CD4-positive, alpha-beta memory T cell (primary cell): ENCODE measurements at regions of chr20 and their contacts with region 1.

Region 1: DNA sequence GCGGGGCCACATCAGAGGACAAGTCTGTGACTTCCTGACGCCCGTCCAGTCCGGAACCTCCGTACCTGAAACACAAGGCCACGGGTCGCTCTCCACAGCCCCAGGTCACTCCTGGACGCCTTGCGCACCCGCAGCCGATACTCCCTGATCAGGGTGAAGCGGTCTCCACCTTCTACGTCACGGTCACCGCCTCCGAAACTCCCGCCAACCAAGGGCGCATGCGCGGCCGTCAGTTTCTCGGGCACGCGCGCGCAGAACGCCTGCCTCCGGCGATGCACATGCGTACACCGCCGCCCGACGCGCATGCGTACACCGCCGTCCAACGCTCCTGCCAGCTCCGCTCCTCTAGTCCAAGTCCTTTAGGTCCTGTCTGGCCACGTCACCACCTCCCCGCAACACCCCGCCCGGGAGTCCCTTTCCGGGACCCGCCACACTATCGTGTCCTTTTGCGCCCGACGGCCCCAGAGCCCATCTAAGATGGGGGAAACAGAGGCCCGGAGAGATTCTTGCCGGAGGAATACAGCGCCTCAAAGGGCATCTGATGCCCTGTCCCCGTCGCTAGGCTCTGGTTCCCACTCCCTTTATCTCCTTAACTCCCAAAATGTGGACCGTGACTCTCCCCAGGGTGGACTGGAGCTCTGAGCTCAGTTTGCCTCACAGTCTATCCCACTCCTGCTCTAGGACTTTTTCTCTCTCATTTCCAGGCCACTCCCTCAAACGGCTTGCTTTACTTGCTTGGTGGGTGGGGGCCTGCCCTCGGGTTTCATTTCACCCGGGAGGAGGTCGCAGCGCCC is at the start of gene DSN1:
- DNase-seq: peak; percentile 95 to 99 (median 97)
- H3K4me3 ChIP-seq: peak within 1 kb of the TSS; percentile 85 to 95
- H3K4me3 Mint-ChIP-seq: peak within 1 kb of the TSS; percentile 92 to 100 (median 96)
- H3K27ac ChIP-seq: peak within 1 kb of the TSS; percentile 85
- H3K27ac Mint-ChIP-seq: peak within 1 kb of the TSS; percentile 95 to 100 (median 98)
- H3K4me1 ChIP-seq: peaks cover 13% of the 10 kb centered on the region
- H3K4me1 Mint-ChIP-seq: peaks cover 9 to 24% (median 18%) of the 10 kb centered on the region in 4 donors
- H3K27me3 ChIP-seq: no peaks in the 10 kb centered on the region
- H3K27me3 Mint-ChIP-seq: no peaks in the 10 kb centered on the region
- total RNA-seq, gene DSN1: 12.8 to 14.3 TPM

Region 2: GRCh38 chr20:36493013-36493800 is 280.6 kb before region 1 on chr20:
- CTCF ChIA-PET with region 1: no interaction called
- POLR2A ChIA-PET with region 1: interaction called, 3 read pairs
- intact Hi-C with region 1: loop called (anchors 1 kb)
- DNase-seq: no peak
- H3K4me3 ChIP-seq: no peak overlapping the region
- H3K4me3 Mint-ChIP-seq: peak overlapping the region in 1 of 8 donors; percentile 85
- H3K27ac ChIP-seq: peak overlapping the region; percentile 59
- H3K27ac Mint-ChIP-seq: peak overlapping the region in 6 of 7 donors; percentile 70 to 95 (median 92)
- H3K4me1 ChIP-seq: peaks cover 39% of the 10 kb centered on the region
- H3K4me1 Mint-ChIP-seq: peaks cover 32 to 59% (median 43%) of the 10 kb centered on the region in 4 donors
- H3K27me3 ChIP-seq: no peaks in the 10 kb centered on the region
- H3K27me3 Mint-ChIP-seq: no peaks in the 10 kb centered on the region

Region 3: GRCh38 chr20:36728986-36729385 is 44.8 kb before region 1 on chr20:
- CTCF ChIA-PET with region 1: interaction called, 4 read pairs
- POLR2A ChIA-PET with region 1: interaction called, 13 read pairs
- intact Hi-C with region 1: no loop called
- DNase-seq: no peak
- H3K4me3 ChIP-seq: no peak overlapping the region
- H3K4me3 Mint-ChIP-seq: no peak overlapping the region
- H3K27ac ChIP-seq: no peak overlapping the region
- H3K27ac Mint-ChIP-seq: peak overlapping the region in 1 of 7 donors; percentile 84
- H3K4me1 ChIP-seq: peaks cover 14% of the 10 kb centered on the region
- H3K4me1 Mint-ChIP-seq: peaks cover 18 to 31% (median 25%) of the 10 kb centered on the region in 4 donors
- H3K27me3 ChIP-seq: no peaks in the 10 kb centered on the region
- H3K27me3 Mint-ChIP-seq: no peaks in the 10 kb centered on the region

Region 4: GRCh38 chr20:36745927-36746659 is 27.7 kb before region 1 on chr20 and contains the start of gene NDRG3:
- CTCF ChIA-PET with region 1: no interaction called
- POLR2A ChIA-PET with region 1: interaction called, 23 read pairs
- intact Hi-C with region 1: loop called (anchors 1 kb)
- DNase-seq: peak; percentile 90 to 94 (median 93)
- H3K4me3 ChIP-seq: peak within 1 kb of the TSS; percentile 79 to 86
- H3K4me3 Mint-ChIP-seq: peak within 1 kb of the TSS; percentile 88 to 95 (median 91)
- H3K27ac ChIP-seq: peak within 1 kb of the TSS; percentile 63
- H3K27ac Mint-ChIP-seq: peak within 1 kb of the TSS; percentile 90 to 97 (median 94)
- H3K4me1 ChIP-seq: peaks cover 21% of the 10 kb centered on the region
- H3K4me1 Mint-ChIP-seq: peaks cover 19 to 41% (median 21%) of the 10 kb centered on the region in 4 donors
- H3K27me3 ChIP-seq: no peaks in the 10 kb centered on the region
- H3K27me3 Mint-ChIP-seq: no peaks in the 10 kb centered on the region
- total RNA-seq, gene NDRG3: 36.1 to 36.2 TPM

Region 5: GRCh38 chr20:36886859-36887751 is 113.3 kb after region 1 on chr20:
- CTCF ChIA-PET with region 1: no interaction called
- POLR2A ChIA-PET with region 1: no interaction called
- intact Hi-C with region 1: loop called (anchors 10 kb)
- DNase-seq: peak; percentile 67 to 74 (median 72)
- H3K4me3 ChIP-seq: no peak overlapping the region
- H3K4me3 Mint-ChIP-seq: peak overlapping the region in 4 of 8 donors; percentile 26 to 51 (median 30)
- H3K27ac ChIP-seq: no peak overlapping the region
- H3K27ac Mint-ChIP-seq: peak overlapping the region; percentile 42 to 87 (median 81)
- H3K4me1 ChIP-seq: peaks cover 12% of the 10 kb centered on the region
- H3K4me1 Mint-ChIP-seq: peaks cover 12 to 22% (median 14%) of the 10 kb centered on the region in 4 donors
- H3K27me3 ChIP-seq: no peaks in the 10 kb centered on the region
- H3K27me3 Mint-ChIP-seq: no peaks in the 10 kb centered on the region